ENCODE measurements at regions of chr16 and their contacts with region 1.

Region 1: DNA sequence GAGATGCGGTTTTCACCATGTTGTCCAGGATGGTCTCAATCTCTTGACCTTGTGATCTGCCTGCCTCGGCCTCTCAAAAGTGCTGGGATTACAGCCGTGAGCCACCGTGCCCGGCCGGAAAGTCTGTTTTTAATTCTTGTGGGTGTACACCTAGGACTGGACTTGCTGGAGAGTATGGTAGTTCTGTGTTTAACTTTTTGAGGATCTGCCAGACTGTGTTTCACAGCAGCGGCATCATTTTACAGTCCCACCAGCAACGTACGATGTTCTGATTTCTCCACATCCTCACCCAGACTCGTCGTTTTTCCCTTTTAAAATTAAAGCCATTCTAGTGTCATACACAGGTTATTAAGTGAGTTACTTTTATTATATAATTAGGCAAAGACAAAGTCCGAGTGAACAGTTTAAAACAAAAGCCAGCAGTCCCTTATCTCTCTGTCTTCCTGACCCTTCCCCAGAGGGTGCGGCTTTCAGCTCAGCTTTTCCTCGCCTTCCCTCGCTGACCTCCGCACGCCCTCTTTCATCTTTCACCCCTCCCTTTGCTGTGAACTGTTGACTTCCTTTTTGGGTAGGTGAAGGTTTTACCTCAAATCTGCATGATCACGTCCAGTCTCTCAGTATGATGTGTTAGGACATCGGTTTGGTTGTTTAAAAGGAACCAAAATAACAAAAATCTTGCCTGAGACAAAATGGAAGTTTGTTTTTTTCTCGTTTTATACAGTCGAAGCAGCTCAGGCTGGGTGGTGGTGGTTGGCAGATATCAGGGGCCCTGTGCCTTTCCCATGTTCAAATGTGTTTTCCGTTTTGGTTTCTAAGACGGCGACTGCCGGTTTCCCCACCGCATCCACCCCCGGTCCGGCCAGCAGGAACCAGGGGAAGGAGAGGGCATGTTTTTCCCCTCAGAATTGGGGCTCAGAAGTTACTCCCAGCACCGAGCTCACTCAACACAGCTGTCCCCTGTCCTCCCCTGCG is 18.0 kb downstream of the FAM234A start:
- DNase-seq: no peak
- ATAC-seq: no peak
- H3K4me3 ChIP-seq: no peak overlapping the region
- H3K27ac ChIP-seq: no peak overlapping the region
- H3K4me1 ChIP-seq: no peaks in the 10 kb centered on the region
- H3K27me3 ChIP-seq: no peaks in the 10 kb centered on the region
- CTCF ChIP-seq: no peak

Region 2: GRCh38 chr16:65671-66137 is 186.9 kb before region 1 on chr16:
- CTCF ChIA-PET with region 1: interaction called, 10 read pairs
- POLR2A ChIA-PET with region 1: no interaction called
- in situ Hi-C with region 1: no loop called
- intact Hi-C with region 1: no loop called
- DNase-seq: peak; percentile 57
- ATAC-seq: peak; percentile 83
- H3K4me3 ChIP-seq: no peak overlapping the region
- H3K27ac ChIP-seq: no peak overlapping the region
- H3K4me1 ChIP-seq: peaks cover 28% of the 10 kb centered on the region
- H3K27me3 ChIP-seq: no peaks in the 10 kb centered on the region
- CTCF ChIP-seq: peak; percentile 99

Region 3: DNA sequence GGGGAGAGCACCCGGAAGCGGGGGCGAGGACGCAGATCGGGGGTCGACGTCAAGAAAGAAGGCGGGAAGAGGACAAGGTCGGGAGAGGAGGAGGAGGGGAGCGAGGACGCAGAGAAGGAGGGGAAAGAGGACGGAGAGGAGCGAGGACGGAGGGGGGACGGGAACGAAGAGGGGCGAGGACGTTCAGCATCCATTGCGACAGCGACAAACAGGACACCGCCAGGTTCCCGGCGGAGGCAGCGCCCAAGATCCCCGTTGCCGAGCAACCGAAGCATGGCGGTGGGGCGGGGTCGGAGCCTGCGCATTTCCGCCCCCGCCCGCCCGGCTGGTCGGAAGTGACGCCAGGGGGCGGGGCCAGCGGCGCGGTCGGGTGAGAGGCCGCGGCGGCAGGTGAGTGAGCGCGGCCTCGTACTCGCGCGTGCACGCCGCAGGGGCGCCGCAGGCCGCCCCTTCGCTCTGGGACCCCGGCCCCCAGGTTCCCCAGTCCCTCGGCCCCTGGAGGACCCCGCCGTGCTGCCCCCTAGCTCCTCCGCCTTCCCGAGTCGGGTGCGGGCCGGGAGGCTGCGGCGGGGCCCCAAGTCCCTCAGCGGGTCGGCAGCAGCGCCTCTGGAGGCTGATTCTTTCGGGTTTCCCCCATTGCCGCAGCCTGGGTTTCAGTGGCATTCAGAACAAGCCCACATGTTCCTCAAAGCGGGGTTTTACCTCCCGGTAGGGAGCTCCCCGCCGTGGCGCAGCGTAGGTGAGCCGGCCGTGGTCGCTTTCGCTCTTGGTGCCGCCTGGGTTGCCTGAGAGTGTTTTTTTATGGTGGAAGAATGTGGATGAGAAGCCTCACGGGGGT is 18.0 kb before region 1 on chr16 and contains the start of gene FAM234A:
- CTCF ChIA-PET with region 1: no interaction called
- POLR2A ChIA-PET with region 1: no interaction called
- in situ Hi-C with region 1: no loop called
- intact Hi-C with region 1: no loop called
- DNase-seq: peak; percentile 50
- ATAC-seq: peak; percentile 94
- H3K4me3 ChIP-seq: peak within 1 kb of the TSS; percentile 92 to 98
- H3K27ac ChIP-seq: peak within 1 kb of the TSS; percentile 91
- H3K4me1 ChIP-seq: no peaks in the 10 kb centered on the region
- H3K27me3 ChIP-seq: no peaks in the 10 kb centered on the region
- CTCF ChIP-seq: no peak; the same call in 1 of the 2 replicates
- total RNA-seq, gene FAM234A: 121 TPM

Region 4: DNA sequence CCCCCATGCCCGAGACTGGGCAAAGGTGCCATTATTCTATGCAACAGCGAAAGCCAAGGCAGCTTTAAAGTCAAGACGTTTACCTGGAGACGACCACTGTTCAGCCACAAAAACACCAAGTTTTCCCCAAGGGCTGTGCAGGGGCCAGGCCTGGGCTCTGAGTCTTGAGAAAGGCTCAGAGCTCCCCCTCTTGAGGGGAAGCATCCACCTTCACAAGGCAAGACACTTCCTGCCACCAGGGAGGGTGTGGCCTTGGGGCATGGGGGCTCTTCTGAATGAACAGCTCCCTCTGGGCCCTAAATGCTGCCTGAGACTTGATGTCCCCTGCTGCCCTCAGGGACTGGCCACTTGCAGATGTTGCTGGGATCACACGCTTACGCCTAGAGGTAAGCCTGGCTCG is 56.8 kb after region 1 on chr16:
- CTCF ChIA-PET with region 1: no interaction called
- POLR2A ChIA-PET with region 1: interaction called, 10 read pairs
- in situ Hi-C with region 1: no loop called
- intact Hi-C with region 1: no loop called
- DNase-seq: no peak
- ATAC-seq: no peak
- H3K4me3 ChIP-seq: no peak overlapping the region
- H3K27ac ChIP-seq: no peak overlapping the region
- H3K4me1 ChIP-seq: no peaks in the 10 kb centered on the region
- H3K27me3 ChIP-seq: no peaks in the 10 kb centered on the region
- CTCF ChIP-seq: no peak

Measured in Panc1 (cell line).